Activated CD4-positive, alpha-beta memory T cell treated with anti-CD3 and anti-CD28 coated beads, Interleukin-2, amount 10 ng/mL, durations not matched to agents 7 days and 5 days (primary cell): ENCODE measurements at regions of chr19 and their contacts with region 1.

Region 1: GRCh38 chr19:48784540-48784939 is 26.3 kb downstream of the BCAT2 start:
- DNase-seq: no peak
- H3K4me3 Mint-ChIP-seq: no peak overlapping the region
- H3K27ac Mint-ChIP-seq: no peak overlapping the region
- H3K4me1 Mint-ChIP-seq: peaks cover 3% of the 10 kb centered on the region
- H3K27me3 Mint-ChIP-seq: peaks cover 14% of the 10 kb centered on the region

Region 2: DNA sequence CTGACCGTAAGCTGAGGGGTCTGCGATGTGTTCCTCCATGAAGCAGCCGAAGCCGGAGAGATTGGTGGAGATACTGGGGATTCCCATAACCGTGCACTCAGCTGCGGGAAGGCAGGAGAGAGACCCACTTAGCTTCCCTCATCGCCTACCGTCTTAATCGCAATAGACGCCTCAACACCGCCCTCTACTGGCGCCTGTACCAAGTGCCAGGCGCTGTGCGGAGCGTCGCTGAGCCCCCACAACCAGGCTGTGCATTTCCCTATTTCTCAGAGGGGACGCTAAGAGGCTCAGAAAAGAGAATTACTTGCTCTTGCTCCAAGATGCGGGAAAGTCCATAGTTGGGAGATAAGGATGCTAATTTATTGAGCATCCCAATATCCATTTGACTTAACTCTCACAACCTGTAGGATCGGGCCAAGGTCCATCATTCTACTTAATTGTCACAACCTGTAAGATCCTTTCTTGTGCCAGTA is 186.4 kb after region 1 on chr19:
- CTCF ChIA-PET with region 1: interaction called, 22 read pairs
- POLR2A ChIA-PET with region 1: interaction called, 3 read pairs
- DNase-seq: peak; percentile 81
- H3K4me3 Mint-ChIP-seq: no peak overlapping the region
- H3K27ac Mint-ChIP-seq: no peak overlapping the region
- H3K4me1 Mint-ChIP-seq: peaks cover 27% of the 10 kb centered on the region
- H3K27me3 Mint-ChIP-seq: no peaks in the 10 kb centered on the region